MCF 10A (cell line): ENCODE measurements at regions of chr11 and their contacts with region 1.

Region 1: DNA sequence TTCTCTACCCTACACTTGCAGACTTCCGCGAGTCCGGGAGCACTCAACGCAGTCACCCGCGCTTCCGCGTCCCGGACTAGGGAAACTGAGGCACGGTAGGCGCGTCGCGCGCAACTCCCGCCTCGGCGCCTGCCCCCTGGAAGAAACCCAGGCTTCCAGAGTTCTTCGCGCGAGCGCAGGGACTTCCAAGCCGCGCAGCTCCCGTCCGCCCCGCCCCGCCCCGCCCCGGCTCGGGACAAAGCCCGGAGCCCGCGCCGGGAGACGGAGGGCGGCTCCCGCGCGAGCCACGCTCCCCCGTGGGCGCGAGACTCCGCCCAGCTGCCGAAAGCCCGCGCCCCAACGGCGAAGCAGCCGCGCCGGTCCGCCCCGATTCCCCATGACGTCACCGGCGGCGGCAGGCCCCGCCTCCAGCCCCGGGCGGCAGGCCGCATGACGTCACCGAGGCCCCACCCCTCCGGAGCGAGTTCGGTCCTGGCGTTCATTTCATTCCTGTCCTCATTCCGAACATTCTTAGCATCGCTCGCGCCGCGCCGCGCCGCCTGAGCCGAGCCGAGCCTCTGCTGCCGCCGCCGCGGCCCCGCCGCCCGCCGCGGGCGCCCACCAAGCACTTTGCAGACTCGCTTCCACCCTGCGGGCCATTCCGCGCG is at the start of gene TEAD1:
- DNase-seq: peak; percentile 91
- H3K4me3 Mint-ChIP-seq: peak within 1 kb of the TSS; percentile 90
- H3K27ac Mint-ChIP-seq: peak within 1 kb of the TSS; percentile 92
- H3K4me1 Mint-ChIP-seq: peaks cover 25% of the 10 kb centered on the region
- H3K27me3 Mint-ChIP-seq: no peaks in the 10 kb centered on the region
- CTCF ChIP-seq: no peak
- total RNA-seq, gene TEAD1: 91.0 and 123 TPM in 2 replicates

Region 2: DNA sequence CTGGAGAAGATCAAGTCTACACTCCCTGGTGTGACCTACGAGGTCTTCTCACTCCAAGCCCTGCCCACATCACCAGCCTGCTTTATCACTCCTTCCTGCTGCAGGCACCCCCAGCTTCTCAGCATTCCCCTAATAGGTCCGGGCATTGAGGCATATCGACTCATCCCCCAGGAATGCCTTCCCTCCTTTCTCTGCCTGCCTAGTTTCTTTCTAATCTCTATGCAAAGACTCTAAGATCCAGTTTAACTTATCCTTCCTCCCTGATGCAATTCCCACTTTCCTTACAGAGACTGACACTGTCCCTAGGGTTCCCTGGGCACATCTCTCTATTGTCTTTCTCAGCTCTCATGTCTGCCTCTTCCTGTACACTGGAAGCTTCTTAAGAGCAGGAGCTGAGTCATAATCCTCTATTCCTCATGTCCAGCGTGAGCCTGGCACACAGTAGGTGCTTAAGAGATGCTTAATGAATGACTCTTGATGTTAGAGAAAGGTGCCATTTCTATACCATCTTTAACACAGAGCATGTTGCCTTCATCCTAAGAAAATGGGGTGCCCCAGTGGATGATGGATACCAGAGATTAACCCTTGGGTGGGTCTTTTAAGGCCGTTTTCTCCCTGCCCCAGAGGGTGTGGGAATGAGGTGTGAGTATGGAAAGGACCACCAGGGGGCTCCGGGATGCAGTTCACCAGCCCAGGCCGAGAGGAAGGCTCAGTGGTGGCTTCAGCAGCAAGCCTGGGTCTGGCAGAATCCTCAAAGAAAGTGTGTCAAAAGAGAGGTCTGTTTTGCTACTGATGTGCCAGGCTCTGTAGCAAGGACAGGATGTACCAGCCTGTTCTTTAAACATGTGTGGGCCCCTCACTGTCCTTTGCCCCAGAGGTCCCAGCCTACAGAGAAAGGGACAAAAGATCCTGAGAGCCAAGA is 262.0 kb before region 1 on chr11:
- CTCF ChIA-PET with region 1: interaction called, 3 read pairs
- POLR2A ChIA-PET with region 1: no interaction called
- intact Hi-C with region 1: loop called (anchors 1 kb)
- DNase-seq: peak; percentile 68
- H3K4me3 Mint-ChIP-seq: no peak overlapping the region
- H3K27ac Mint-ChIP-seq: peak overlapping the region; percentile 63
- H3K4me1 Mint-ChIP-seq: peaks cover 17% of the 10 kb centered on the region
- H3K27me3 Mint-ChIP-seq: no peaks in the 10 kb centered on the region
- CTCF ChIP-seq: peak; percentile 57

Region 3: DNA sequence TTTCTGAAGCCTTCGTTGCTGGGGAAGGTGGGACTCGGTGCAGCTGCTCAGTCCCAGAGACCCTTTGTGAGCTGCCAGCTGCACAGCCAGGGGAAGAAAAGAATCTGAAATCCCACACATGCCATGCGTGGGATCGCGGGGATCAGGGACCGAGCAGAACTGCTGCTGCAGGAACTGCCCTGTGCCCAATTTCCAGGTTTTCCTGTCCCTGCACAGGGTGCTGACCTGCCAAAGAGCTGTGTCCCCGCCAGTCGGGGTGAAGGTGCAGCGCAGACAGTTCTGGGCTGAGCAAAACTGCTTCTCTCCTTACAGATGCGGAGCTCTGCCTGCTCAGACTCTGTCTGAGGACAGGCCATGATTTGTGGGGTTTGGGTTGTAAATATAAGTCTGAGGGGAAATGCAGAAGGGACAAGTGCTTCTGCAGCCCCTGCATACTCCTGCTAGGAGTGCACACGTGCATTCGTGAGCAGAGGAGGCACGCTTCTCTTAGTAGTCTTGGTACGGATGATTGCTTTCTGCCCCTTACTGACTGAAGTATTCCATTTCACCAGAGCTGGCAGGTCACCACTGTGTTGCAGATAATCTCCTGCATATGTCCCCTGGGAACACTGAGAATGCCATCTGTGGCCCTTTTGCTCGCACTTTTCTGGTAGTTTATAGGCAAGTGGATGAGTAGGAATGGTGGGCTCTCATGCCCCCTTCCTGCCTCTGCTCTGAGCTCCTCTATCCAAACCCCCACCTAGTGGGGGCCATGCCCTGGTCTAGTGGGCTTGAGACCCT is 155.3 kb before region 1 on chr11:
- CTCF ChIA-PET with region 1: no interaction called
- POLR2A ChIA-PET with region 1: no interaction called
- intact Hi-C with region 1: no loop called
- DNase-seq: no peak
- H3K4me3 Mint-ChIP-seq: no peak overlapping the region
- H3K27ac Mint-ChIP-seq: no peak overlapping the region
- H3K4me1 Mint-ChIP-seq: no peaks in the 10 kb centered on the region
- H3K27me3 Mint-ChIP-seq: no peaks in the 10 kb centered on the region
- CTCF ChIP-seq: no peak

Region 4: GRCh38 chr11:12581923-12582322 is 92.1 kb before region 1 on chr11:
- CTCF ChIA-PET with region 1: no interaction called
- POLR2A ChIA-PET with region 1: no interaction called
- intact Hi-C with region 1: loop called (anchors 10 kb)
- DNase-seq: peak; percentile 50
- H3K4me3 Mint-ChIP-seq: no peak overlapping the region
- H3K27ac Mint-ChIP-seq: no peak overlapping the region
- H3K4me1 Mint-ChIP-seq: peaks cover 10% of the 10 kb centered on the region
- H3K27me3 Mint-ChIP-seq: peaks cover 10% of the 10 kb centered on the region
- CTCF ChIP-seq: no peak

Region 5: GRCh38 chr11:12755510-12756453 is 81.7 kb after region 1 on chr11:
- CTCF ChIA-PET with region 1: interaction called, 3 read pairs
- POLR2A ChIA-PET with region 1: interaction called, 10 read pairs
- intact Hi-C with region 1: no loop called
- DNase-seq: peak; percentile 32
- H3K4me3 Mint-ChIP-seq: no peak overlapping the region
- H3K27ac Mint-ChIP-seq: peak overlapping the region; percentile 92
- H3K4me1 Mint-ChIP-seq: peaks cover 44% of the 10 kb centered on the region
- H3K27me3 Mint-ChIP-seq: no peaks in the 10 kb centered on the region
- CTCF ChIP-seq: no peak

Region 6: GRCh38 chr11:12813371-12814225 is 139.6 kb after region 1 on chr11:
- CTCF ChIA-PET with region 1: interaction called, 11 read pairs
- POLR2A ChIA-PET with region 1: interaction called, 21 read pairs
- intact Hi-C with region 1: loop called (anchors 2 kb)
- DNase-seq: peak; percentile 75
- H3K4me3 Mint-ChIP-seq: no peak overlapping the region
- H3K27ac Mint-ChIP-seq: peak overlapping the region; percentile 26
- H3K4me1 Mint-ChIP-seq: peaks cover 57% of the 10 kb centered on the region
- H3K27me3 Mint-ChIP-seq: no peaks in the 10 kb centered on the region
- CTCF ChIP-seq: peak; percentile 23